Breast epithelium (tissue), 4 donors: ENCODE measurements at regions of chr3 and their contacts with region 1.

Region 1: GRCh38 chr3:124620600-124621063 is 109.6 kb upstream of the UMPS start:
- DNase-seq: no peak
- H3K4me3 ChIP-seq: no peak overlapping the region
- H3K27ac ChIP-seq: no peak overlapping the region
- H3K4me1 ChIP-seq: no peaks in the 10 kb centered on the region
- H3K27me3 ChIP-seq: no peaks in the 10 kb centered on the region
- CTCF ChIP-seq: no peak
- POLR2A ChIP-seq: no peak

Region 2: GRCh38 chr3:123155471-123156011 is 1465.1 kb before region 1 on chr3:
- intact Hi-C with region 1: loop called (anchors 5 kb)
- DNase-seq: no peak
- H3K4me3 ChIP-seq: no peak overlapping the region
- H3K27ac ChIP-seq: no peak overlapping the region
- H3K4me1 ChIP-seq: no peaks in the 10 kb centered on the region
- H3K27me3 ChIP-seq: no peaks in the 10 kb centered on the region
- CTCF ChIP-seq: no peak
- POLR2A ChIP-seq: no peak

Region 3: GRCh38 chr3:124607160-124607559 is 13.5 kb before region 1 on chr3:
- intact Hi-C with region 1: no loop called
- DNase-seq: no peak
- H3K4me3 ChIP-seq: no peak overlapping the region
- H3K27ac ChIP-seq: no peak overlapping the region
- H3K4me1 ChIP-seq: no peaks in the 10 kb centered on the region
- H3K27me3 ChIP-seq: no peaks in the 10 kb centered on the region
- CTCF ChIP-seq: no peak
- POLR2A ChIP-seq: no peak